MCF 10A (cell line): ENCODE measurements at regions of chr5 and their contacts with region 1.

Region 1: DNA sequence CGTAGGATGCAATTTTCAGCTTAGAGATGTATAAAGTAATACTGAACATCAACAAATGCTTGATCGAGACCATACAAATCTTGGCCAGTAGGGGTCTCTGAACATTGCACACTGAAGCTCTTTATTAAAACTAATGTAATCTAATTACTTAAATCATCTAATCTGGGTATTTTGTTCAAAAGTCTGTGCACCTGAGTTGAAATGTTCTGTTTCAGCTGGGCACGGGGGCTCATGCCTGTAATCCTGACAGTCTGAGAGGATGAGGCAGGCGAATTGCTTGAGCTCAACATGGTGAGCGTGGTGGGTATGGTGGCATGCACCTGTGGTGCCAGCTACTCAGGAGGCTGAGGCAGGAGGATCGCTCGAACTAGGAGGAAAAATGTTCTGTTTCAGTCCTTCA is 41.0 kb downstream of the ESM1 start:
- DNase-seq: peak; percentile 50
- H3K4me3 Mint-ChIP-seq: no peak overlapping the region
- H3K27ac Mint-ChIP-seq: no peak overlapping the region
- H3K4me1 Mint-ChIP-seq: no peaks in the 10 kb centered on the region
- H3K27me3 Mint-ChIP-seq: peaks cover 55% of the 10 kb centered on the region
- CTCF ChIP-seq: peak; percentile 69

Region 2: DNA sequence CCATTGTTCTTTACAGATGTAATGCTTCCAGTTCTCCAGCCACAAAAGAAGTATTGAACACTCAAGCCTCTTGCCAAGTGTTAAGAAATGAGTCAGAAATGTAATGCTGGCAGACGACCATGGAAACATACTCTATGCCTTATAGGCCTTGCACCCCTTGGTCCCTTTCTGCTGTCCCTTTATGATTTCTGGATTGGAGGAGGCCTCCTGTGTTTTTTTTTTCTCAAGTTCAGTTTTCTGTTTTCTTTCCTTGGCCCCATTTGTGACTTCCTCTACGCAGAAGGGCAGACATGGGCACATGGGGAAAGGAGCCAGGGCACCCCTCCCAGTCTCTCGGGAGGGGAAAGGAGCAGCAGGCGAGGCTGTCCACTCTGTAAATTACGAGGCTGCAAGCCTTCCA is 373.4 kb before region 1 on chr5:
- CTCF ChIA-PET with region 1: no interaction called
- POLR2A ChIA-PET with region 1: no interaction called
- intact Hi-C with region 1: no loop called
- DNase-seq: peak; percentile 38
- H3K4me3 Mint-ChIP-seq: no peak overlapping the region
- H3K27ac Mint-ChIP-seq: no peak overlapping the region
- H3K4me1 Mint-ChIP-seq: no peaks in the 10 kb centered on the region
- H3K27me3 Mint-ChIP-seq: no peaks in the 10 kb centered on the region
- CTCF ChIP-seq: no peak

Region 3: GRCh38 chr5:54689411-54690251 is 254.7 kb before region 1 on chr5:
- CTCF ChIA-PET with region 1: no interaction called
- POLR2A ChIA-PET with region 1: no interaction called
- intact Hi-C with region 1: no loop called
- DNase-seq: no peak
- H3K4me3 Mint-ChIP-seq: no peak overlapping the region
- H3K27ac Mint-ChIP-seq: no peak overlapping the region
- H3K4me1 Mint-ChIP-seq: no peaks in the 10 kb centered on the region
- H3K27me3 Mint-ChIP-seq: no peaks in the 10 kb centered on the region
- CTCF ChIP-seq: no peak

Region 4: DNA sequence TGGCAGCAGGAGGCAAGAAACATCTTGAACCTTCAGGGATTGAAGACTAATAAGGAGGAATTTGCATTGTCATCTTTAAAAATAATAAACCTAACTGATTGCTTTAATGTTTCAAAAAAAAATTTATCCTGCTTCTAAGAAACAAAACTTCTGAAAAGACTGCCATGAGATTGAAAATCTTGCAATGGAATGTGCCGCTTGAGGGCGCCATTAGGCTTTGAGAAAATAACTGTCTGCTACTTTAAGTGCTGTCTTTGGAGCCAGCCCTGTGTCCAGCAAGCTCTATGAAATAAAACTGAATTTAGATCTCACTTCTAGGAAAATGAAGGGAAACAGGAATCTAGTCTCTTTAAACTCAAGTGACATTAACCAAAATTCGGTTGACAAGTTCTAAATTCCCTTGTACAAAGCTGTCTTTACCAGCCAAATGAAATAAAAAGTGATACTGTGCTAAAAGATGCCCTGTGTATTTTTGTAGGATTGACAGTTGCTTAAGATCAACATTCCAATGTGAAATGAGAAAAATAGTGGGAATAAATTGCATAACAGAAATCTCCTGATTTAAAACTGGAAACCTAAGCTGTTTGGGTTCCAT is 38.3 kb before region 1 on chr5:
- CTCF ChIA-PET with region 1: interaction called, 35 read pairs
- POLR2A ChIA-PET with region 1: interaction called, 4 read pairs
- intact Hi-C with region 1: loop called (anchors 2 kb)
- DNase-seq: peak; percentile 69
- H3K4me3 Mint-ChIP-seq: no peak overlapping the region
- H3K27ac Mint-ChIP-seq: no peak overlapping the region
- H3K4me1 Mint-ChIP-seq: no peaks in the 10 kb centered on the region
- H3K27me3 Mint-ChIP-seq: peaks cover 32% of the 10 kb centered on the region
- CTCF ChIP-seq: peak; percentile 61

Region 5: DNA sequence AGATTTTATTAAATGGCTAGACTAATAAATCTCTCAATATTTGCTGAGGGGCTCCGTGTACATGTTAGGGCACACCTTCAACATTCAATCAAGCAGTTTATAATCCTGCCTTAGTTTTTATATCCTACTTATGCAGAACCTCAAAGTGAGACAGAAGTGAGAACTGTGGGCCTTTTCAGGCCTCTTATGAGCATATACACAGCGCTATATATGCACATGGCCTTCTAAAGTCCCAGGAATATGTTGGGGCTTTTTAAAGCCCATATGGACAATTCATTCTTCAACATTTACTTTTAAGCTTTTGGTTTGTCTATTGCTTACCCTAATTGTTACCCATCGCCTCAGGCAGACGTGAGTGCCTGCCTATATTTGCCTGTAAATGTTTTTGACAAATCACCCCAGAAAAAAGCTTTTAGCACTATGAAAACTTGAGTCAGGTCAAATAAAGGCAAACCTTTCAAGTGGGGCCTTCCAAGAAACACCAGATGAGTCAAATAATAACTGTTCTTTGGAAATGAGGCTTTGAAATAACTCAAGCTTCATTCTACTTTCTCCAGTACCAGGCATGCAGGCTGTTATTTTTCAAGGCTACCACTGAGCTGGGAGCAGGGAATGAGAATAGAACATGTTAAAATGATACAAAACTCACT is 17.1 kb before region 1 on chr5:
- CTCF ChIA-PET with region 1: interaction called, 26 read pairs
- POLR2A ChIA-PET with region 1: no interaction called
- intact Hi-C with region 1: no loop called
- DNase-seq: no peak
- H3K4me3 Mint-ChIP-seq: no peak overlapping the region
- H3K27ac Mint-ChIP-seq: no peak overlapping the region
- H3K4me1 Mint-ChIP-seq: no peaks in the 10 kb centered on the region
- H3K27me3 Mint-ChIP-seq: peaks cover 7% of the 10 kb centered on the region
- CTCF ChIP-seq: no peak

Region 6: GRCh38 chr5:54965806-54966205 is 21.4 kb after region 1 on chr5:
- CTCF ChIA-PET with region 1: interaction called, 31 read pairs
- POLR2A ChIA-PET with region 1: no interaction called
- intact Hi-C with region 1: no loop called
- DNase-seq: no peak
- H3K4me3 Mint-ChIP-seq: no peak overlapping the region
- H3K27ac Mint-ChIP-seq: no peak overlapping the region
- H3K4me1 Mint-ChIP-seq: no peaks in the 10 kb centered on the region
- H3K27me3 Mint-ChIP-seq: peaks cover 71% of the 10 kb centered on the region
- CTCF ChIP-seq: no peak

Region 7: GRCh38 chr5:55146543-55147151 is 202.3 kb after region 1 on chr5:
- CTCF ChIA-PET with region 1: interaction called, 90 read pairs
- POLR2A ChIA-PET with region 1: interaction called, 14 read pairs
- intact Hi-C with region 1: loop called (anchors 1 kb)
- DNase-seq: peak; percentile 90
- H3K4me3 Mint-ChIP-seq: no peak overlapping the region
- H3K27ac Mint-ChIP-seq: no peak overlapping the region
- H3K4me1 Mint-ChIP-seq: no peaks in the 10 kb centered on the region
- H3K27me3 Mint-ChIP-seq: peaks cover 63% of the 10 kb centered on the region
- CTCF ChIP-seq: peak; percentile 89

Region 8: DNA sequence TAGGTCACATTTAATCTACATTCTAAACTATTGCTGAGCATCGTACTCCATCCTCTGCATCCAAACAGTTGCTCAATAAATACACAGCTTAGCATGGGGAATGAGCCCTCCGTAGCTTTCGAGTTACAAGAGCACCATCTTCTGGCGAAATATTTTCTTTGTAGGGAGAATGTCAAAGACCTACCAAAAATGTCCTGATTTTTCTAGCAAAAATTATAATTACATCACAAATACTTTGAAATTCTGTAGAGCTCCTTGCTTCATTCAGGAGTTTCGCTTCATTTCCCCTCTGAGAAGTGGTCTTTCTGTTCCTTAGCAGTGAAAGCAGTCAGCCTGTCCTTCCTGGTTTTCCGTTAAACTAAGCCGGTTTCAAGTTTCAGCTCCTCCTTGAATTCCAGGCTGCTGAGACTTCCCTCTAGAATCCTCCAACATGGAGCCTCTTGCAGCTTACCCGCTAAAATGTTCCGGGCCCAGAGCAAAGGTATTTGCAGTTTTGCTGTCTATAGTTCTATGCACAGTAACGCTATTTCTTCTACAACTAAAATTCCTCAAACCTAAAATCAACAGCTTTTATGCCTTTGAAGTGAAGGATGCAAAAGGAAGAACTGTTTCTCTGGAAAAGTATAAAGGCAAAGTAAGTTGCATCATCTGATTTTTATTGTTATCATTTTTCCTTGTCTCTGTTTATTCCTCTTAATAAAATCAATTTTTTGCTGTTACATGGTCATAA is 215.6 kb after region 1 on chr5 and contains the start of gene GPX8:
- CTCF ChIA-PET with region 1: interaction called, 35 read pairs
- POLR2A ChIA-PET with region 1: interaction called, 24 read pairs
- intact Hi-C with region 1: no loop called
- DNase-seq: peak; percentile 88
- H3K4me3 Mint-ChIP-seq: peak within 1 kb of the TSS; percentile 78
- H3K27ac Mint-ChIP-seq: peak within 1 kb of the TSS; percentile 82
- H3K4me1 Mint-ChIP-seq: peaks cover 2% of the 10 kb centered on the region
- H3K27me3 Mint-ChIP-seq: peaks cover 13% of the 10 kb centered on the region
- CTCF ChIP-seq: peak; percentile 66
- total RNA-seq, gene GPX8: 37.2 and 38.8 TPM in 2 replicates